Sigmoid colon (tissue), 7 donors: ENCODE measurements at regions of chr11 and their contacts with region 1.

Region 1: DNA sequence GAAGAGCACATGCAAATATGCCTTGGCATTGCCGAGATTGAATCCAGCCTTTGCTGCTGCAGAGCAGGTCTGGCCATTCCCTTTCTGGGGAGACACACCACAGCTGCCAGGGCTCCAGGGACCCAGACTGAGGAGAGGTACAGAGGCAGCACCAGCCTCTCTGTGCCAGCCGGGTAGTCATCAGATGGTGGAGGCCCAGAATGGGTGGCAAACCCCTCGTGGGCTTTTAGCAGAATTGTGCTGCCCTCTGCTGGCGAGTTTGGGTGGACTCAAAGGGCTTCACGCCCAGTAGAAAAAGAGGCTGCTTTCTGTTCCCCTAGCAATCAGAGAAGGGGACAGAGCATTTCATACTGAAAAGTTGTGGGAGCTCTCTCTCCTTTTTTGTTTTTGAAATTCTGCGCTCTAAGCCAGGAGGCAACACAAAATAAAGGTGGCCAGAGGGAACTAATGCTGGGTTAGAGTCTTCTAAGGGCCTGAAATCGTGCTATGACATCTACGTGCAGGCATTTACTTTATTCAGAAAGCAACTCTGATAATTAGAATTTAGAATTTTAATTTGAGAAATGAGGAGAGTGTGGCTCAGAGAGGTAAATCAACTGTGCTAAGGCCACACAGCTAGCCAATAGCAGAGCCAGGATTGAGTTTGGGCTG is 158.8 kb upstream of the NAV2 start:
- DNase-seq: peak; percentile 88
- H3K4me3 ChIP-seq: no peak overlapping the region
- H3K27ac ChIP-seq: no peak overlapping the region
- H3K4me1 ChIP-seq: peaks cover 0 to 11% (median 4%) of the 10 kb centered on the region in 4 donors
- H3K27me3 ChIP-seq: no peaks in the 10 kb centered on the region
- CTCF ChIP-seq: peak; percentile 70 to 87 (median 82)
- EP300 ChIP-seq: no peak
- POLR2A ChIP-seq: no peak

Region 2: GRCh38 chr11:19259487-19260345 is 294.1 kb before region 1 on chr11:
- intact Hi-C with region 1: loop called (anchors 2 kb)
- DNase-seq: no peak
- H3K4me3 ChIP-seq: peak overlapping the region in 1 of 4 donors; percentile 8
- H3K27ac ChIP-seq: no peak overlapping the region
- H3K4me1 ChIP-seq: no peaks in the 10 kb centered on the region
- H3K27me3 ChIP-seq: no peaks in the 10 kb centered on the region
- CTCF ChIP-seq: peak in 3 of 4 experiments; percentile 74 to 93 (median 77)
- EP300 ChIP-seq: no peak
- POLR2A ChIP-seq: no peak

Region 3: GRCh38 chr11:19800162-19800561 is 246.4 kb after region 1 on chr11:
- intact Hi-C with region 1: loop called (anchors 5 kb)
- DNase-seq: no peak
- H3K4me3 ChIP-seq: no peak overlapping the region
- H3K27ac ChIP-seq: no peak overlapping the region
- H3K4me1 ChIP-seq: peaks cover 0 to 84% (median 77%) of the 10 kb centered on the region in 4 donors
- H3K27me3 ChIP-seq: no peaks in the 10 kb centered on the region
- CTCF ChIP-seq: no peak
- EP300 ChIP-seq: no peak
- POLR2A ChIP-seq: no peak

Region 4: GRCh38 chr11:20110908-20111669 is 557.3 kb after region 1 on chr11:
- intact Hi-C with region 1: loop called (anchors 5 kb)
- DNase-seq: no peak
- H3K4me3 ChIP-seq: no peak overlapping the region
- H3K27ac ChIP-seq: peak overlapping the region; percentile 79 to 93 (median 88)
- H3K4me1 ChIP-seq: peaks cover 0 to 81% (median 69%) of the 10 kb centered on the region in 4 donors
- H3K27me3 ChIP-seq: no peaks in the 10 kb centered on the region
- CTCF ChIP-seq: peak; percentile 23 to 74 (median 70)
- EP300 ChIP-seq: peak; percentile 44 to 93 (median 89)
- POLR2A ChIP-seq: no peak

Region 5: DNA sequence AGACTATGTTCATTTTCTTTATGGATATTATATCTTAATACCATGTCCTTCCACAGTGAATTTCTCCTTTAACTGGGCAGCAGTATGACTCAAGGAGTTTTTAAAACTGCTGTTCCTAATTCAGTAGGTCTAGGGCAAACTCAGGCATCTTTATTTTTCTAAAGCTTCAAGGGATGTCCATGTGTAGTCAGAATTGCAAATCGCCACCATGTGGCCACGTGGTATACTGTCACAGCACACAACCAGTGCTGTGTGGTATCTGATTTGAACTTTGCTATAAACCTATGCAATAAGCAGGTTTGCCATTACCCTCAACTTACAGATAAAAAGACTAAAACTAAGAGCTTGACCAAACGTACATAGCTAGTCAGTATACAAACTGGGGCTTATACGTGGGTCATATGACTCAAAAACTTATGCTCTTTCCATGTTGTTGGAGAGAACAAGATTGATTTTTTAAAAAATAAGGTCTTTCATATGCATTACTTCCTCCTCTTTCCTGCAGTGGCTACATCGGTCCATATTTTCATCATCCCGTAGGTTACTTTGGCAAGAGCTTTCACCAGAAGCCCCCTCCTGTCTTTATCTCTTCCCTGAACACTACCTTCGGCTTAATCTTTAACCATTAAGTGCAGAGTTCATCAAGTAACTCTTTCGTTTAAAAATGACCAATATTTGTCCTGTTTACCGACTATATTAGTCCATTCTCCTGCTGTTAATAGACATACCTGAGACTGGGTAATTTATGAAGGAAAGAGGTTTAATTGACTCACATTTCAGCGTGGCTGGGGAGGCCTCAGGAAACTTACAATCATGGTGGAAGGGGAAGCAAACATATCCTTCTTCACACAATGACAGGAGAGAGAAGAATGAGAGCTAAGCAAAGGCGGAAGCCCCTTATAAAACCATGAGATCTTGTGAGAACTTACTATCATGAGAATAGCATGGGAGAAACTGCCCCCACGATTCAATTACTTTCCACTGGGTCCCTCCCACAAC is 801.7 kb after region 1 on chr11:
- intact Hi-C with region 1: loop called (anchors 10 kb)
- DNase-seq: no peak
- H3K4me3 ChIP-seq: no peak overlapping the region
- H3K27ac ChIP-seq: no peak overlapping the region
- H3K4me1 ChIP-seq: peaks cover 0 to 5% (median 3%) of the 10 kb centered on the region in 4 donors
- H3K27me3 ChIP-seq: no peaks in the 10 kb centered on the region
- CTCF ChIP-seq: peak in 1 of 4 experiments; percentile 48
- EP300 ChIP-seq: no peak
- POLR2A ChIP-seq: no peak